IMR-90 (cell line): ENCODE measurements at regions of chr12 and their contacts with region 1.

Region 1: DNA sequence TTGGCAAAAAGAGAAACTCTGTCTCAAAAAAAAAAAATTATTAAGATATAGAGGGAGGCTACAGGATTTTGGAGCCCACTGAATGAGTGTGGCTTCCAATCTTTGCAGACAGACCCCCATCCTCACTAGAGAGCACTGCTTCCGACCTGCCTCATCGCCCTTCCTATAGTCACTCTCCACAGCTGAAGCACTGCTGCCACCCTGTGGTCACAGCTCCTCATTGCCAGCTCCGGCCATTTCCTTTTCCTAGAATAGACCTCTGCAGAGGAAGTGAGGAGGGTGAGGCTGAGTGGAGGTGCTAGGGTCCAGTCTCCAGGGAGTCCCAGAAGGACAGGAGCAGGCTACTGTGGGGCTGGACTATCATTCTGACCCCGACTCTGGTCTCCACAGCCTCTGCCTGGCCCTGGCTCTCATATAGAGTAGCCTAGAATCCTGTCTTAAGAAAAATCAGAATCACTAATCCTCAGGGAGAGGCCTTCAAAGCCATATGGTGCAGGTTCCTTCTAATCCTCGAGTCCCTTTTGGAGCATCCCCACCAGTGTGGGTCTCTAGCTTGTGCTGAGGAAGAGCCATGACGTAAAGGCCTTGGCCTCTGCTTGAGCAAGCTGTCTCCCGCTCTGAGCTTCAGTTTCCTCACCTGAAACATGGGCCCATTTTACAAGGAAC is 1.4 kb upstream of the NPFF start:
- DNase-seq: peak; percentile 67
- ATAC-seq: peak; percentile 93
- H3K4me3 ChIP-seq: no peak overlapping the region
- H3K27ac ChIP-seq: no peak overlapping the region
- H3K4me1 ChIP-seq: no peaks in the 10 kb centered on the region
- H3K27me3 ChIP-seq: no peaks in the 10 kb centered on the region
- CTCF ChIP-seq: peak; percentile 94
- POLR2A ChIP-seq: peak; percentile 52; the same call in 1 of the 2 replicates
- RAD21 ChIP-seq: peak; percentile 95

Region 2: GRCh38 chr12:53481957-53482586 is 26.6 kb before region 1 on chr12:
- CTCF ChIA-PET with region 1: interaction called, 14 read pairs
- POLR2A ChIA-PET with region 1: no interaction called
- dilution Hi-C with region 1: no loop called
- in situ Hi-C with region 1: no loop called
- intact Hi-C with region 1: no loop called
- DNase-seq: no peak
- ATAC-seq: peak; percentile 5; the same call in 1 of the 2 replicates
- H3K4me3 ChIP-seq: no peak overlapping the region
- H3K27ac ChIP-seq: no peak overlapping the region
- H3K4me1 ChIP-seq: peaks cover 12% of the 10 kb centered on the region
- H3K27me3 ChIP-seq: no peaks in the 10 kb centered on the region
- CTCF ChIP-seq: peak; percentile 17; the same call in 1 of the 2 replicates
- POLR2A ChIP-seq: no peak
- RAD21 ChIP-seq: peak; percentile 9; the same call in 1 of the 2 replicates